Caco-2 (cell line): ENCODE measurements at regions of chr2 and their contacts with region 1.

Region 1: DNA sequence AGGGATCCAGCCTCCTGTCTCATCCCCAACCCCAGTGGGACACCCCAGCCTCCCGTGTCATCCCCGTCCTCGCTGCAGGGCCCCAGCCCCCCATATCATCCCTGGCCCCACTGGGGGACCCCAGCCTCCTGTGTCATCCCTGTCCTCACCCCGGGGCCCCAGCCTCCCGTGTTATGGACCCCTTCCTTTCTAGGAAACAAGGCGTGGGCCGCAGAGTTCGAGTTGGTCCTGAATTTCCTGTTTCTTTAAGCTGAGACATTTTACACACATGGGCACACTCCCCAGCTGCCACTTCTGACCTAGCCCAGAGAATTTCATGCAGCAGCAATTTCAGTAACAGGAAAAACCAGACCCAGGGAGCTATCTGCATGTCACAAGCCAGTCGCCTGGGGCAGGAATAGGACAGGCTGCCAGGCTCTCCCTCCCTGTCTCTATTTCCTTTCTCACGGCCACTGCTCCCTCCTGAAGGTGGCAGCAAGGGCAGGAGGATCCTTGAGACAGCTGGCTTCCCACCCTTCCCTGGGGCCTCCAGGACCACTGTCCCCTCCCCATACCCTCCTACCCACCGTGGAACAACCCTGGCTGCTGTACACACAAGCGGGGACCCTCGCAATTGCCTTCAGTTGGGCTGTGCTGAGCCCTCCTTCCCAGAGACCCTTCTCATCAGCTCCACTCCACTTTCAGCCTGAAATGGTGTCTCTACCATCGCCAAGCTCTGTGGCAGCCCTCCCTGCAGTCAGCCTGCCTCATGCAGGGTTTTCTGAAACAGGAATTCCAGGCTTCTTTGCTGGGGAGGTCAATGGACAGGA is 141.9 kb upstream of the ID2 start:
- DNase-seq: peak; percentile 78 to 82
- H3K4me3 ChIP-seq: no peak overlapping the region
- H3K4me3 Mint-ChIP-seq: peak overlapping the region; percentile 51
- H3K27ac Mint-ChIP-seq: peak overlapping the region; percentile 82
- H3K4me1 ChIP-seq: peaks cover 53% of the 10 kb centered on the region
- H3K4me1 Mint-ChIP-seq: peaks cover 37% of the 10 kb centered on the region
- H3K27me3 ChIP-seq: no peaks in the 10 kb centered on the region
- H3K27me3 Mint-ChIP-seq: no peaks in the 10 kb centered on the region
- CTCF ChIP-seq: peak in 1 of 2 experiments; percentile 25

Region 2: GRCh38 chr2:7373156-7373555 is 1166.8 kb before region 1 on chr2:
- CTCF ChIA-PET with region 1: no interaction called
- POLR2A ChIA-PET with region 1: no interaction called
- intact Hi-C with region 1: no loop called
- DNase-seq: no peak
- H3K4me3 ChIP-seq: no peak overlapping the region
- H3K4me3 Mint-ChIP-seq: no peak overlapping the region
- H3K27ac Mint-ChIP-seq: no peak overlapping the region
- H3K4me1 ChIP-seq: no peaks in the 10 kb centered on the region
- H3K4me1 Mint-ChIP-seq: no peaks in the 10 kb centered on the region
- H3K27me3 ChIP-seq: no peaks in the 10 kb centered on the region
- H3K27me3 Mint-ChIP-seq: peaks cover 9% of the 10 kb centered on the region
- CTCF ChIP-seq: no peak

Region 3: DNA sequence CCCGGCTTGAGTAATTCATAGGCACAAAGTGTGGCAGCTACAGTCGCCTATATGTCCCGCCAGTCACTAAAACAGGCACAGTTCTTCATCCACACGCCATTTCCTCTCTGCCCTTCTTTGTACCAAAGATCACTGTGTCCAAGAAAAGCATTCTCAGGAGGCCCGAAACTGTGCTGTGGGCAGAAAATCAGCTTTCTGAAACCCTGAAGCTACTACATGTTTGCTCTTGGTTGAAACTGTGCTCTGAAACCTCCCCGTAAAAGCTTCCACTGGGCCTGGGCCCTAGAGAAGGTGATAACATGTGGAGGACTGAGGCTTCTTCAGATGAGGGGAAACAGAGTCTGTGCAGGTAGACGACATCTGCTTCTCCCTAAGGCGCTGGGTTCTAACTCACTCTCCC is 66.3 kb after region 1 on chr2:
- CTCF ChIA-PET with region 1: interaction called, 3 read pairs
- POLR2A ChIA-PET with region 1: no interaction called
- intact Hi-C with region 1: loop called (anchors 5 kb)
- DNase-seq: peak in 1 of 2 experiments; percentile 8
- H3K4me3 ChIP-seq: no peak overlapping the region
- H3K4me3 Mint-ChIP-seq: no peak overlapping the region
- H3K27ac Mint-ChIP-seq: peak overlapping the region; percentile 69
- H3K4me1 ChIP-seq: peaks cover 86% of the 10 kb centered on the region
- H3K4me1 Mint-ChIP-seq: peaks cover 69% of the 10 kb centered on the region
- H3K27me3 ChIP-seq: no peaks in the 10 kb centered on the region
- H3K27me3 Mint-ChIP-seq: no peaks in the 10 kb centered on the region
- CTCF ChIP-seq: no peak